ENCODE measurements at regions of chr2 and their contacts with region 1.

Region 1: GRCh38 chr2:38465789-38466127 is 88.7 kb upstream of the ATL2 start:
- DNase-seq: no peak
- H3K4me3 ChIP-seq: no peak overlapping the region
- H3K27ac ChIP-seq: peak overlapping the region; percentile 68 to 69
- H3K4me1 ChIP-seq: no peaks in the 10 kb centered on the region
- H3K27me3 ChIP-seq: no peaks in the 10 kb centered on the region
- CTCF ChIP-seq: peak in 2 of 4 experiments; percentile 35 to 47
- POLR2A ChIP-seq: no peak

Region 2: GRCh38 chr2:38499548-38500546 is 34.1 kb after region 1 on chr2:
- intact Hi-C with region 1: loop called (anchors 5 kb)
- DNase-seq: no peak
- H3K4me3 ChIP-seq: no peak overlapping the region
- H3K27ac ChIP-seq: peak overlapping the region; percentile 44 to 67
- H3K4me1 ChIP-seq: no peaks in the 10 kb centered on the region
- H3K27me3 ChIP-seq: no peaks in the 10 kb centered on the region
- CTCF ChIP-seq: no peak
- POLR2A ChIP-seq: no peak

Region 3: GRCh38 chr2:38797276-38797675 is 331.5 kb after region 1 on chr2:
- intact Hi-C with region 1: no loop called
- DNase-seq: no peak
- H3K4me3 ChIP-seq: no peak overlapping the region
- H3K27ac ChIP-seq: no peak overlapping the region
- H3K4me1 ChIP-seq: no peaks in the 10 kb centered on the region
- H3K27me3 ChIP-seq: no peaks in the 10 kb centered on the region
- CTCF ChIP-seq: no peak
- POLR2A ChIP-seq: no peak